ENCODE measurements at regions of chr16 and their contacts with region 1.

Region 1: DNA sequence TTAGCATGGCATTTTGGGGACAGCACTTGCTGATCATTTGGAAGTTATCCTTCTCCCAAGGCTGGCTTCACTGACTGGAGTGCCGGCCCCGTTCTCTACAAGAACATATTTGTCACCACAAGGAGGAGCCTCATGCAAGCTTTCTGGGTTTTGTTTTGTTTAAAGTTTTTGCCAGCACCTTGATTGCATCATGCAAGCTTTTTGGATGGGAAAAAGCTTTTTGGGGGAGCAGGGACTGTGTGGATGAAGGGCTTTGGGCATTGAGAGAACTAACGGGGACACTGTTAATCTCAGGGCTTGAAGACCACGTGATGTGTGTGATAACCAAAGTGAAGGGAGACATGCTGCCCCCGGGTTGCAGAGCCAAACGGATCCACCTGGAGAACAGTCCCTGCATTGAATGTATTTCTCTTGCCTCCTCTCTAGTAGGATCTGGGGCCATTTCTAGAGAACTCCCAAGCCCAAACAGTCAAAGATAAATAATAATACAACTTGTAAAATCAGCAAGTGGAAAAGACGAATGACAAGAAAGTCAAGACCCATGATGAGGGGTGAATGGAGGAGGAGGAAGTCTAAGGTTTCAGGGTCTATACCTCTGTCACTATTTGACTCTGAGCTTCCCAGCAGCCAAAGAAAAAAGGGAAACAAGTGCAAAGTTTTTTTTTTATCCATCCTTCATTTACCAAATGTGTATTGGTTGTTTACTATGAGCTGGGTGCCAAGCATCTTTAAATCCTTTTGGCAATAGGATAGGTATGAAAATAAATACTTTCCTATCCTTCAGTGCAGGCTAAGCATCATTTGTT is 17.2 kb downstream of the TMEM114 start:
- DNase-seq: no peak
- H3K4me3 ChIP-seq: no peak overlapping the region
- H3K27ac ChIP-seq: no peak overlapping the region
- H3K4me1 ChIP-seq: peaks cover 6 to 33% (median 33%) of the 10 kb centered on the region in 4 donors
- H3K27me3 ChIP-seq: peaks cover 0 to 55% (median 4%) of the 10 kb centered on the region in 4 donors
- CTCF ChIP-seq: peak; percentile 22 to 40 (median 29)
- EP300 ChIP-seq: no peak
- POLR2A ChIP-seq: no peak

Region 2: DNA sequence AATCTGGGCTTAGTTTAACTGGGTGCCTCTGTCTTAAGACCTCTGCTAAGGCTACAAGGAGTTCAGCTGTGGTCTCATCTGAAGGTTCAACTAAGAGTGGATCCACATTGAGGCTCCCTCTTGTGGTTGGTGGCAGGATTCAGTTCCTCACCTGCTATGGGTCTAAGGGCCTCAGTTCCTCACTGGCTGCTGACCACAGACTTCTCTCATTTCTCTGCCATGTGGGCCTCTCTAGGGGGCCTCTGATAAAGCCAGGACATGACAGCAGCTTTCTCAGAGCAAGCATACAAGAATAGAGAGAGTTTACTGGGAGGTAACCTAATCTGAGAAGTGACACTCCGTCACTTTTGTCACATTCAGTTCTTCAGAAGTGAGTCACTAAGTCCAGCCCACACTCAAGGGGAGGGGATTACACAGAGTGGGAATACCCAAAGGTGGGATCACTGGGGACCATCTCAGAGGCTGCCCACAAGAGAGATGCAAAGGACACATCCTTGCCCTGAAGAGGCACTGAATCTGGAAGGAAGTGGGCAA is 82.1 kb after region 1 on chr16:
- intact Hi-C with region 1: loop called (anchors 5 kb)
- DNase-seq: no peak
- H3K4me3 ChIP-seq: no peak overlapping the region
- H3K27ac ChIP-seq: no peak overlapping the region
- H3K4me1 ChIP-seq: no peaks in the 10 kb centered on the region
- H3K27me3 ChIP-seq: no peaks in the 10 kb centered on the region
- CTCF ChIP-seq: peak in 2 of 3 experiments; percentile 23 to 49
- EP300 ChIP-seq: no peak
- POLR2A ChIP-seq: no peak

Measured in esophagus muscularis mucosa (tissue), 4 donors.